Prostate gland (tissue), 2 donors: ENCODE measurements at regions of chr15 and their contacts with region 1.

Region 1: GRCh38 chr15:101251830-101252820 is at the start of gene CHSY1:
- DNase-seq: peak; percentile 89
- H3K4me3 ChIP-seq: peak within 1 kb of the TSS; percentile 76
- H3K27ac ChIP-seq: peak within 1 kb of the TSS; percentile 84 to 88
- H3K4me1 ChIP-seq: peaks cover 3% of the 10 kb centered on the region
- H3K27me3 ChIP-seq: no peaks in the 10 kb centered on the region
- CTCF ChIP-seq: peak in 3 of 4 experiments; percentile 19 to 48 (median 45)
- POLR2A ChIP-seq: peak; percentile 85
- total RNA-seq, gene CHSY1: 30.4 to 46.4 TPM

Region 2: DNA sequence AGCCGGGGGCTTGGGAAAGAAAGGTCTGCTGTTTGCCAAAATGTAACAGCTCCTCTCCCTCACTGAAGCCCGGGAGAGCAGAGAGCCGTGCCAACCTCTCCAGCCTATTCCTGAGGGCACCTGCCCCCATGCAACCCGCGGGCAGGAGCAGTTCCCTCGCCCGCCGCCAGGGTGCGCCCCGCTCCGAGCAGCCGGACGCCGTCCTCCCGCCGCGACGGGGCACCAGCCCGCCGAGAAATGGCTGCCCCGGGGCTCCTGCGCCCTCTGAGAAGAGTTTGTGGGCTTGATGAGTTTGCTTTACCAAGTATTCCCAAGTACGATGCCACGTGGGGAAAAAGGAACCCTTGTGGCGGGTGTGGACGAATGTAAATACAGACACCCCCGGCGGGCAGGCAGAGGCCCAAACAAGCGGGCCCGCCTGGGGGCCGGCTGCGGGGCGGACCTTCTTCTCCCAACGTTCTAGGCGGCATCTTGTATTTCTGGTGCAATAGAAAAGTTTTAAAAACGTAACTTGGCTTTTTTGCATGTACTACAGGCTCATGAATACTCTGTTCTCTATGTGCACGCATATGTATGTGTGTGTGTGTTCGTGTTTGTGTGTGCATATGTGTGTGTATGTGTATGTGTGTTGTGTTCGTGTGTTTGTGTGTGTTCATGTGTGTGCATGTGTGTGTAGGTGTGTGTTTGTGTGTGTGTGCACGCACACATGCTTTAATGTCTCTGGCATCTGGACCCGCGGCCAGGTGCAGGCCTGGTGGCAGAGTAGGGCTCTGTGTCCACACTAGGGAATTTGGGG is 163.1 kb before region 1 on chr15:
- intact Hi-C with region 1: loop called (anchors 2 kb)
- DNase-seq: peak; percentile 59
- H3K4me3 ChIP-seq: peak overlapping the region in 1 of 2 donors; percentile 29
- H3K27ac ChIP-seq: peak overlapping the region in 1 of 2 donors; percentile 16
- H3K4me1 ChIP-seq: no peaks in the 10 kb centered on the region
- H3K27me3 ChIP-seq: no peaks in the 10 kb centered on the region
- CTCF ChIP-seq: peak; percentile 98 to 99 (median 98)
- POLR2A ChIP-seq: no peak

Region 3: GRCh38 chr15:101179341-101180153 is 72.6 kb before region 1 on chr15:
- intact Hi-C with region 1: loop called (anchors 5 kb)
- DNase-seq: peak; percentile 55
- H3K4me3 ChIP-seq: no peak overlapping the region
- H3K27ac ChIP-seq: peak overlapping the region; percentile 76 to 77
- H3K4me1 ChIP-seq: peaks cover 23% of the 10 kb centered on the region
- H3K27me3 ChIP-seq: no peaks in the 10 kb centered on the region
- CTCF ChIP-seq: no peak
- POLR2A ChIP-seq: no peak